AG04450 (cell line): ENCODE measurements at regions of chr10 and their contacts with region 1.

Region 1: GRCh38 chr10:101840741-101841453 is 2.7 kb downstream of the KCNIP2 start:
- DNase-seq: peak; percentile 56
- H3K4me3 ChIP-seq: peak overlapping the region; percentile 54
- H3K27ac ChIP-seq: no peak overlapping the region
- H3K27me3 ChIP-seq: peaks cover 3% of the 10 kb centered on the region
- CTCF ChIP-seq: peak; percentile 96

Region 2: GRCh38 chr10:101818119-101818871 is 22.6 kb before region 1 on chr10 and contains the start of gene OGA:
- CTCF ChIA-PET with region 1: interaction called, 19 read pairs
- POLR2A ChIA-PET with region 1: interaction called, 17 read pairs
- DNase-seq: peak; percentile 100
- H3K4me3 ChIP-seq: peak within 1 kb of the TSS; percentile 98
- H3K27ac ChIP-seq: peak within 1 kb of the TSS; percentile 90
- H3K27me3 ChIP-seq: no peaks in the 10 kb centered on the region
- CTCF ChIP-seq: no peak
- polyA plus RNA-seq, gene OGA: 71.9 and 82.6 TPM in 2 replicates

Region 3: DNA sequence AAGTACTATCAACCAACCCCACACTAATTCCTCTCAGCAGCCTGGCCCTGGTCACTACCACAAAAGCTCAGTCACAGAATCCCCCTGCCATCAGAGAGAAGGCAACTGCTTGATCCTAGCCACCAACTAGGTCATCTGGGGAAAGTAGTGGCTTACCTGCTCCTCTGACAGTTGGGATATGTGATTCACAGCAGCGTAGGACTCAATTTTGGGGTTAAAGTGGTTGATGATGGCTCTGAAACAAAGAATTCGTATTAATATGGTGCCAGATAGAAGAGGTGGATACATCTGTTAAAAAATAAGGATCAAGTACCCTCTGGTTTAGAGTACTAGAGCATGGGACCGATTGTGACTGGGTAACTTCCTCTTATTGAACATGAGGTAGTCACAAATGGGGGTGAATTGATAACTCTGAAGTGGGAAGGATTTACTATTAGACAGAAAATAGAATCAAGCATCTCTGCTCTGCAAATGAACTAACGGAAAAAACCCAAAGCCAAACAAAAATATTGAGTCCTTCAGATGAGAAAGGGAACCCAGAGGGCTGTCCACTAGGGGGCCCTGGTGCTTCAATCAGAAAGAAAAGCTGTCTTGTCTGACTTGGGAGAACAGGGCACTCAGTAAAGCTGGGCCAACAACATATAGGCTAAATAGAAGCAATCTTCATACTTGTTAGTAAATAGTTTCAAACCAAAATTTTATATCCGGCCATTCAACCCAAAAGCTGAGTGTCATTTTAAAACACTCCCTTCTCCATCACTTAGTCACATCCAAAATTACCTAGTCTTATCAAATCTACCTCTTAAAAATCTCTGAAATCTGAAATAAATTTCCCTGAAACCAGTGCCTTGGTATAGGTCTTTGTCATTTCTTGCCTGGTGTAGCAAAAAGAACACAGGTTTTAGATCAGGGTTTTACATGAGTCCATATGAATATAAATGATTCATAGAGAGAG is 48.6 kb after region 1 on chr10:
- CTCF ChIA-PET with region 1: interaction called, 52 read pairs
- POLR2A ChIA-PET with region 1: no interaction called
- DNase-seq: peak; percentile 61
- H3K4me3 ChIP-seq: no peak overlapping the region
- H3K27ac ChIP-seq: no peak overlapping the region
- H3K27me3 ChIP-seq: no peaks in the 10 kb centered on the region
- CTCF ChIP-seq: peak; percentile 97

Region 4: GRCh38 chr10:101995451-101996063 is 154.7 kb after region 1 on chr10:
- CTCF ChIA-PET with region 1: interaction called, 11 read pairs
- POLR2A ChIA-PET with region 1: no interaction called
- DNase-seq: no peak
- H3K4me3 ChIP-seq: no peak overlapping the region
- H3K27ac ChIP-seq: peak overlapping the region; percentile 25
- H3K27me3 ChIP-seq: no peaks in the 10 kb centered on the region
- CTCF ChIP-seq: no peak

Region 5: DNA sequence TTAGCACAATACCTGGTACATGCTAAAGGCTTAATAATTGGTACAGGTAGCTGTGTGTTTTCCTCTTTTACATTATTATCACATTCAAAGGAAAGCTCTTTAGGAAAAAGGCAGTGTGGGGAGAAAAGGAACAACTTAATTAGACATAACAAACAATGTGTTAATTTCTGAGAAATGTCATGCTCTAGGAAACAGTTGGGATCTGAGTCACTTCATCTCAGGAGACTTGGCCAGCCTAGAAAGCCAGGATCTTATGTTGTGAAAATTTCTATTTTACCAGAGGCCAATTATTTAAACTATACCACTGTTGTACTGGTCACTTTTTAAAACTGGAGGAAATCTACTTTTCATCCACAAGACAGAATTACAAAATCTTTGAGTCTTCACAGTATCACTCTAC is 175.5 kb after region 1 on chr10:
- CTCF ChIA-PET with region 1: interaction called, 256 read pairs
- POLR2A ChIA-PET with region 1: no interaction called
- DNase-seq: no peak
- H3K4me3 ChIP-seq: no peak overlapping the region
- H3K27ac ChIP-seq: no peak overlapping the region
- H3K27me3 ChIP-seq: no peaks in the 10 kb centered on the region
- CTCF ChIP-seq: no peak

Region 6: DNA sequence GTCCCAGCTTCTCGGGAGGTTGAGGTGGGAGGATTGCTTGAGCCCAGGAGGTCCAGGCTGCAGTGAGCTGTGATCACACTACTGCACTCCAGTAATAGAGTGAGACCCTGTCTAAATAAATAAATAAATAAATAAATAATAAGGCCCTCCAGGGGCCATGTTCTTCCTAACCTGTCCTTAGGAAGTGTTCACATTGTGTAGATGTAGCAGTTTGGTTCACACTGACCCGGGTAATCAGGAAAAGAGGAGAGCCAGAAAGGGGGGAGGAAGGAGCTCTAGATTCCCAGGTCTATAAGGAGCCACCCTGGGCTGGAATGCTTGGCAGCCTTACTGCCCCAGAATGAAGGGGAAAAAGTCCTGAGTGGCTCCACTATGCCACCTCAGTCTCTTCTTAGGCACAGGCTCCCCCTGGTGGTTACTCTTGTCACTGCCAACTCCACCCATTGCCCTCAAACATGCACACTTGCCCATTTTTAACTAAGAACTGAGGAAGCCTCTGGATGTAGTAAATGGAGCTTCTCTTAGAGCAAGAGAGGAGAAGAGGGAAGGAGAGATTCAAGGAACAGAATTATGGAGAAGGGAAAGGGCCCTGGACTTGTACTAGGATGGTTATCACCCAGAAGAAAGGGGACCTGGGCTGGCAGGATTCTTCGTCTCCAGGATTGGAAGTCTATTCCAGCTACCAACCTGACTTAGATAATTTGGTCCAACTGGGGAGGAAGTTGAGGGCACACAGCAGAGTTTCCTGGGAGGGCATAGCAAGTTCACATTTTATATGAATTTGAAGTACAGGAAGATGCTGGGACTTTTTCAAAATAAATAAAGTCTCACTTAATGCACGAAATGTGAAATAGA is 232.0 kb after region 1 on chr10:
- CTCF ChIA-PET with region 1: interaction called, 46 read pairs
- POLR2A ChIA-PET with region 1: interaction called, 3 read pairs
- DNase-seq: peak; percentile 59
- H3K4me3 ChIP-seq: no peak overlapping the region
- H3K27ac ChIP-seq: no peak overlapping the region
- H3K27me3 ChIP-seq: no peaks in the 10 kb centered on the region
- CTCF ChIP-seq: peak; percentile 97

Region 7: GRCh38 chr10:102342958-102343357 is 502.1 kb after region 1 on chr10:
- CTCF ChIA-PET with region 1: no interaction called
- POLR2A ChIA-PET with region 1: no interaction called
- DNase-seq: peak; percentile 39
- H3K4me3 ChIP-seq: no peak overlapping the region
- H3K27ac ChIP-seq: peak overlapping the region; percentile 63
- H3K27me3 ChIP-seq: no peaks in the 10 kb centered on the region
- CTCF ChIP-seq: no peak